ENCODE measurements at regions of chr14 and their contacts with region 1.

Region 1: DNA sequence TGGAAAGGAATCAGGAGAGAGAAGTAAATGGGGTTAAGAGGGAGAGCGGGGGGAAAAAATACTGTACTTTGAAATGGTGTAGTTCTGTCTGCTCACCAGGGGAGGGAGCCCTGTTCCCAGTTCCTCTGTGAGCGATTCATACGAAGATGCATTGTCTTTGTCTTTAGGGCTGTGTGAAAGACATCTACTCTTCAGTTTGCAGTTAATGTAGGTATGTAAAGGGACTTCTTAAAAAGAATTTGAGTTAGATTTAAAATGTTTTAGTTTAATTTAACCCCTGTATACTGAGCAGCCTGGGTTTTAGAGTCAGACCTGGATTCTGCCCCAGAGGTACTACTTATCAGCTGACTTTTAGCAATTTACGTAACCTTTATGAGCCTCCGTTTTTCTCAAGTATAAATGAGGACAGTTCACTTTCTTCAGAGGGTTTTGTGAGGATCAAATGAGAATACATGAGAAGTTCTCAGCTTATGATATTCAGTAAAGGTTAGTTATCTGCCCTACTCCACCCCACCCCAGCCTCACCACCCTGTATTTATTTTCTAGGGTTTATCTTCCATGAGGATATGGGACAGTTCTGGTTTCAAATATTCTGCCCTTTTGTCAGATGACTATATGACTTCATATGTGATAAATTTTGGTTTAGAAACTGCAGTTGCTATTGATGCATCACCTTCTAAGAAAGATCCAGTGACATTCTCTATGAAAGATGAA is 82.5 kb upstream of the EVL start:
- DNase-seq: peak; percentile 64 to 73 (median 69)
- H3K4me3 ChIP-seq: no peak overlapping the region
- H3K4me3 Mint-ChIP-seq: no peak overlapping the region
- H3K27ac ChIP-seq: no peak overlapping the region
- H3K27ac Mint-ChIP-seq: no peak overlapping the region
- H3K4me1 ChIP-seq: no peaks in the 10 kb centered on the region
- H3K4me1 Mint-ChIP-seq: peaks cover 3 to 11% (median 10%) of the 10 kb centered on the region in 4 donors
- H3K27me3 ChIP-seq: no peaks in the 10 kb centered on the region
- H3K27me3 Mint-ChIP-seq: no peaks in the 10 kb centered on the region

Region 2: DNA sequence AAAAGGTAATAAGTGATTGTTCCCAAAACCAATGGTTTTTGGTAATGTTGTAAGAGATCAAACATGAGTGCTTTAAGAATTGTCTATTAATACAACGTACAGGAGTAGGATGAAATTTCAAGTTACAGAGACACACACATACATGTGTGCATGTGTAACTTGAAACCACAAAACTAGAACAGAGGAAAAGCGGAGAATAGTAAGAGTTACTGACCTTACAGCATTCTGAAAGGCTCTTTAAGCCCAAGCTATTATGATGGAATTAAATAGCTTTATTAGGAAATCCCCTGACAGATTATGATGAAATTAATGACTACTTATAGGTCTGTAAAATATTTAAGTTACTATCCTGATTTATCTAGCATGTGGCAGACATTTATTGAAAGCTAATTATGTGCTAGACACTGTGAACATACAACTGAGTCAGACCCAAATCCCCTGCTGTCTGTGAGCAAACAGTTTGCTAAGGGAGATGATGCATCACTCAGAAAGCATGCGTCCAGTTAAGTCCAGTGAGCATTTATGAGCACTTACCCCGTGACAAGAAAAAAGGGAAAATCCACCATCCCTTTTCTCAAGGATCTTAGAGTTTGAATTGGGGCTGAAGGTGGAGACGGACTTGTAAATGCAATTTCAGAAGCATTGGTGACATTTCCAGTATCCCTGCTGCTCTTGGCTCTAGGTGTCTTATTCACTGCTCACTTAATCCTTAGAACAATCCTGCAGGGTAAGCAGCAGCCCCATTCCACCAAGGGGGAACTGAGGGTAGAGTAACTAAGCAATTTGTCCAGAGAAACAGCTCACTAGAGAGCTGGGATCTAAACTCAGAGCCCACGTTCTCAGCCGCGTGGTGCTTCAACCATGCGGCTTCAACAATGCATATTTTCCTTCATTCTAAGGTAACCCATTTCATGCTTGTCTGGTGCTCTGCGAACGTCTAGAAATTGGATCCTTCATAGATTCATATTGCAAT is 72.1 kb before region 1 on chr14:
- CTCF ChIA-PET with region 1: no interaction called
- POLR2A ChIA-PET with region 1: no interaction called
- intact Hi-C with region 1: no loop called
- DNase-seq: no peak
- H3K4me3 ChIP-seq: no peak overlapping the region
- H3K4me3 Mint-ChIP-seq: no peak overlapping the region
- H3K27ac ChIP-seq: no peak overlapping the region
- H3K27ac Mint-ChIP-seq: no peak overlapping the region
- H3K4me1 ChIP-seq: no peaks in the 10 kb centered on the region
- H3K4me1 Mint-ChIP-seq: no peaks in the 10 kb centered on the region
- H3K27me3 ChIP-seq: no peaks in the 10 kb centered on the region
- H3K27me3 Mint-ChIP-seq: peaks cover 12 to 22% of the 10 kb centered on the region in 2 donors

Region 3: GRCh38 chr14:100056964-100057795 is 74.5 kb after region 1 on chr14:
- CTCF ChIA-PET with region 1: interaction called, 5 read pairs
- POLR2A ChIA-PET with region 1: no interaction called
- intact Hi-C with region 1: loop called (anchors 1 kb)
- DNase-seq: peak; percentile 61 to 71 (median 66)
- H3K4me3 ChIP-seq: no peak overlapping the region
- H3K4me3 Mint-ChIP-seq: peak overlapping the region; percentile 20 to 80 (median 40)
- H3K27ac ChIP-seq: peak overlapping the region; percentile 3
- H3K27ac Mint-ChIP-seq: peak overlapping the region; percentile 80 to 95 (median 92)
- H3K4me1 ChIP-seq: peaks cover 56% of the 10 kb centered on the region
- H3K4me1 Mint-ChIP-seq: peaks cover 37 to 58% (median 46%) of the 10 kb centered on the region in 4 donors
- H3K27me3 ChIP-seq: no peaks in the 10 kb centered on the region
- H3K27me3 Mint-ChIP-seq: no peaks in the 10 kb centered on the region

Region 4: DNA sequence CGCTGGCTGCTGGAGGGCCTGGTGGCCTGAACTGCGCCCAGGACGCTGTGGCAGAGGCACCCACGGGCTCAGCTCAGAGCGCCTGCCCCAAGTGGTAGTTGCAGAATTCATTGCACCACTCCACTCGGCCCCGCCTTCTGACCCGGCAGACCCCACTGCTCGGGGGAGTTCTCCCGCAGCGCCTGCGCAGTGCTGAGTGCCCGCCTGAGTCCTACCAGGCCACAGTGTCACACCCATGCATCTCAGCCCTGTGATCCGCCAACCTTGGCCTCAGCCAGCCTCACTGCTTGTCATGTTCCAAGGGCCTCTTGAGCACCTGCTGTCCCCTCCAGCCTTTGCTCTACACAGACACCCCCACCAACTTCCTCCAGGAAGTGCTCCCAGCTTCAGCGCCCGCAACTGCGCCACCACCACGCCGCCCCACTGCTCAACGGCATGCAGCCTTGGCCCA is 164.5 kb after region 1 on chr14:
- CTCF ChIA-PET with region 1: interaction called, 3 read pairs
- POLR2A ChIA-PET with region 1: no interaction called
- intact Hi-C with region 1: loop called (anchors 1 kb)
- DNase-seq: peak; percentile 61 to 82 (median 73)
- H3K4me3 ChIP-seq: no peak overlapping the region
- H3K4me3 Mint-ChIP-seq: peak overlapping the region; percentile 54 to 79 (median 74)
- H3K27ac ChIP-seq: no peak overlapping the region
- H3K27ac Mint-ChIP-seq: peak overlapping the region; percentile 73 to 96 (median 88)
- H3K4me1 ChIP-seq: peaks cover 28% of the 10 kb centered on the region
- H3K4me1 Mint-ChIP-seq: peaks cover 7 to 36% (median 20%) of the 10 kb centered on the region in 4 donors
- H3K27me3 ChIP-seq: no peaks in the 10 kb centered on the region
- H3K27me3 Mint-ChIP-seq: no peaks in the 10 kb centered on the region

Region 5: GRCh38 chr14:100285021-100285912 is 302.6 kb after region 1 on chr14:
- CTCF ChIA-PET with region 1: interaction called, 5 read pairs
- POLR2A ChIA-PET with region 1: no interaction called
- intact Hi-C with region 1: loop called (anchors 1 kb)
- DNase-seq: peak; percentile 78 to 83 (median 80)
- H3K4me3 ChIP-seq: peak overlapping the region in 1 of 2 donors; percentile 85
- H3K4me3 Mint-ChIP-seq: peak overlapping the region in 6 of 8 donors; percentile 64 to 83 (median 72)
- H3K27ac ChIP-seq: peak overlapping the region; percentile 83
- H3K27ac Mint-ChIP-seq: peak overlapping the region in 3 of 7 donors; percentile 60 to 83 (median 78)
- H3K4me1 ChIP-seq: peaks cover 13% of the 10 kb centered on the region
- H3K4me1 Mint-ChIP-seq: peaks cover 3 to 16% (median 6%) of the 10 kb centered on the region in 4 donors
- H3K27me3 ChIP-seq: no peaks in the 10 kb centered on the region
- H3K27me3 Mint-ChIP-seq: no peaks in the 10 kb centered on the region